ENCODE measurements at regions of chr7 and their contacts with region 1.

Region 1: GRCh38 chr7:30800785-30801252 is 29.6 kb downstream of the MINDY4 start:
- DNase-seq: peak; percentile 93
- H3K4me3 ChIP-seq: 0 out of 2 replicates have a peak overlapping the region, but pooled peaks have one; percentile 29
- H3K27ac ChIP-seq: no peak overlapping the region
- H3K4me1 ChIP-seq: peaks cover 60% of the 10 kb centered on the region
- H3K27me3 ChIP-seq: no peaks in the 10 kb centered on the region

Region 2: GRCh38 chr7:30745261-30745941 is 55.4 kb before region 1 on chr7:
- in situ Hi-C with region 1: loop called (anchors 5 kb)
- DNase-seq: no peak
- H3K4me3 ChIP-seq: no peak overlapping the region
- H3K27ac ChIP-seq: no peak overlapping the region
- H3K4me1 ChIP-seq: peaks cover 3% of the 10 kb centered on the region
- H3K27me3 ChIP-seq: peaks cover 6% of the 10 kb centered on the region; the same call in 1 of the 2 replicates

Region 3: GRCh38 chr7:30974605-30975255 is 173.9 kb after region 1 on chr7:
- in situ Hi-C with region 1: loop called (anchors 5 kb)
- DNase-seq: peak; percentile 56
- H3K4me3 ChIP-seq: no peak overlapping the region
- H3K27ac ChIP-seq: no peak overlapping the region
- H3K4me1 ChIP-seq: no peaks in the 10 kb centered on the region
- H3K27me3 ChIP-seq: peaks cover 42% of the 10 kb centered on the region

Region 4: DNA sequence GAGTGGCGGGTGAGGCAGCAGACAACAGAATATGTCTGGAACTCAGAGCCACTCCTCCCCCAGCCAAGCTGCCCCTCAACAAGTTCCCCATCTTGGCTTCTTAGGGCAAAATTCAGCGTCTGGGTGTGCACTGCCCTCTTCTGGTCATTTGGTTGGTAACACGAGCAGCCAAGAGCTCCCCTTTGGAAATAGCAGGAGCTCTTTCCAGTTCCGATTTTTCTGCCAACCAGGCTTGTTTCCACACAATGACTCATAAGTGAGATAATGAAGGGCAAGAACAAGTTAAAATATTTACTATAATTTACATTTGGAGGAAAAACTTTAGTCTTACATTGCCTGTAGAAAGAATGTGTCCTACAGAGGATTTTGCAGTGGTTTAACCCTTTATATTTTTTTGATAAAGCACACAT is 321.8 kb after region 1 on chr7:
- in situ Hi-C with region 1: loop called (anchors 5 kb)
- DNase-seq: peak; percentile 91
- H3K4me3 ChIP-seq: no peak overlapping the region
- H3K27ac ChIP-seq: no peak overlapping the region
- H3K4me1 ChIP-seq: peaks cover 3% of the 10 kb centered on the region; the same call in 1 of the 2 replicates
- H3K27me3 ChIP-seq: peaks cover 8% of the 10 kb centered on the region; the same call in 1 of the 2 replicates